ENCODE measurements at regions of chr11 and their contacts with region 1.

Region 1: GRCh38 chr11:48020092-48020755 is 39.9 kb downstream of the PTPRJ start:
- DNase-seq: peak; percentile 72
- H3K4me3 Mint-ChIP-seq: peak overlapping the region; percentile 62
- H3K27ac Mint-ChIP-seq: peak overlapping the region; percentile 92
- H3K4me1 Mint-ChIP-seq: peaks cover 85% of the 10 kb centered on the region
- H3K27me3 Mint-ChIP-seq: no peaks in the 10 kb centered on the region

Region 2: DNA sequence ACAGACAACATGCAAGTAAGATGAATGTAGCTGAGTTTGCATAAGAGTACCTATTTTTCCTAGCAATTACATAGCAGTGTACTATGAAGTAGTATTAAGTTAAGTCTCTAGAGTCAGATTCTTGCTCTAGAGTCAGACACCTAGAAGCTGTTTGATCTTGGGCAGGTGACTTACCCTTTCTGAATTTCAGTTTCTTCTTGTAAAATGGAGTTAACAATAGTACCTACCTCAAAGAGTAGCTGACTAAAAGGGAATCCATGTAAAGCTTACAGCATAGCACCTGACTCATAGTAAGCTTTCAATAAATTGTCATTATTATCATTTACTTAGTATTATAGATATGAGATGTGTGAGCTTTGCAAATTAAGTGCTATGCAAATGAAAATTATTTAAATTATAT is 87.7 kb before region 1 on chr11:
- CTCF ChIA-PET with region 1: interaction called, 57 read pairs
- POLR2A ChIA-PET with region 1: interaction called, 26 read pairs
- DNase-seq: no peak
- H3K4me3 Mint-ChIP-seq: no peak overlapping the region
- H3K27ac Mint-ChIP-seq: no peak overlapping the region
- H3K4me1 Mint-ChIP-seq: peaks cover 29% of the 10 kb centered on the region
- H3K27me3 Mint-ChIP-seq: no peaks in the 10 kb centered on the region

Region 3: DNA sequence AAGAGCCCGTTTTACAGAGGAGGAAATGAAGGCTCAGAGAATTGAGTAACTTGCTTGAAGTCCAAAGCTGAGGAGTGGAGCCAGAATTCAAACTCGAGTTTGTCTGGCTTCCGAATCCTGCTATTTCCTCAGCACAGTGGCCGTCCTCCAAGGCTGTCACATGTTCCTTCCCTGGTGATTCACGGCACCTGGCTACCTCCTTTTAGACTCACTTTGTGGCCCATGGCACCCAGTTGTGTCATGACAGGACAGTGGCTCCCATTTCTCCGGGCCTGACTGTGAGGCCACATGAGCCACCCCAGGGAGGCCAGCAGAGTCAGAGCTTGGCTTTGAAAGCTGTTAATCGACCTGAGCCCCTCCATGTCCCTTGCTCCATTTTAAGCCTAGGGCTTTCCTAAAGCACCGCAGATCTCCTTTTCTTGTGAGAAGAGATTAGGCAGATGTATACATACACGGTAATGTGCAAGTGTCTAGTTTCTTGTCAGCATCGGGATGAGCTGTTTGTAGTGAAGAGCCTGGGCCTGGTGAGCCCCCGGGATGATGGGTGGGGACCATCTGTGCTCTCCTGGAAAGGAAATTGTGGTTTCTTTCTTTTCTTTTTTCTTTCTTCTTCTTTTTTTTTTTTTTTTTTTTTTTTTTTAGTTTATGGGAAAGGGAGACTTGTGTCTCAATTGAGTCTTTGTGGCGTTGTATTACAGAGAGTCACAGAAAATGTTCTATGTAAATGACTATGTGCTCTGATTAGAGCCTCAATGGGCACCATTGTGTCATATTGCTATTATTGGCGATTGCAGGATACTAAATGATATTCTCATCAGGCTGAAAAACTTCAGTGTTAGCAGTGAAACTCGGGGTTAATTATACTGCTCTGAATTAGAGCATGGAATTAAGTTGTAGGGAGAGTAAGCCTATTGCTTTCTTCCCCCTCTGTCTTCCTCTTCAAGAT is 15.0 kb after region 1 on chr11:
- CTCF ChIA-PET with region 1: interaction called, 3 read pairs
- POLR2A ChIA-PET with region 1: interaction called, 10 read pairs
- DNase-seq: no peak
- H3K4me3 Mint-ChIP-seq: no peak overlapping the region
- H3K27ac Mint-ChIP-seq: peak overlapping the region; percentile 5
- H3K4me1 Mint-ChIP-seq: peaks cover 69% of the 10 kb centered on the region
- H3K27me3 Mint-ChIP-seq: no peaks in the 10 kb centered on the region

Measured in activated CD4-positive, alpha-beta memory T cell treated with anti-CD3 and anti-CD28 coated beads, Interleukin-2, amount 10 ng/mL, durations not matched to agents 7 days and 5 days (primary cell).